CD8-positive, alpha-beta T cell (primary cell): ENCODE measurements at regions of chr1 and their contacts with region 1.

Region 1: DNA sequence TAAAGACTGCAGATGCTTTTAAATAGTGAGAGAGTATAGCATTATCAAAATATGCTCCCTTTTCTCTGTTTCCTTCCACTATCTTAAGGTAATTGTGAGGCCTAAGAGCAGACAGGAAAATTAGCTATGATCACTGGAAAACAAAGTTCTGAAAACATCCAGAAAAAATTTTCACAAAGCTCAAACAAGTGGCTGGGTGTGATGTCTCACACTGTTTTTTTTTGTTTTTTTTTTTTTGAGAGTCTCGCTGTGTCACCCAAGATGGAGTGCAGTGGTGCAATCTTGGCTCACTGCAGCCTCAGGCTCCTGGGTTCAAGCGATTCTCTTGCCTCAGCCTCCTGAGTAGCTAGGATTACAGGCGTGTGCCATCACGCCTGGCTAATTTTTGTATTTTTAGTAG is 7.2 kb downstream of the WDTC1 start:
- DNase-seq: no peak
- ATAC-seq: no peak
- H3K4me3 ChIP-seq: no peak overlapping the region
- H3K4me3 Mint-ChIP-seq: no peak overlapping the region
- H3K27ac ChIP-seq: no peak overlapping the region
- H3K27ac Mint-ChIP-seq: no peak overlapping the region
- H3K4me1 ChIP-seq: no peaks in the 10 kb centered on the region
- H3K4me1 Mint-ChIP-seq: peaks cover 16% of the 10 kb centered on the region
- H3K27me3 ChIP-seq: no peaks in the 10 kb centered on the region
- H3K27me3 Mint-ChIP-seq: no peaks in the 10 kb centered on the region
- CTCF ChIP-seq: no peak

Region 2: DNA sequence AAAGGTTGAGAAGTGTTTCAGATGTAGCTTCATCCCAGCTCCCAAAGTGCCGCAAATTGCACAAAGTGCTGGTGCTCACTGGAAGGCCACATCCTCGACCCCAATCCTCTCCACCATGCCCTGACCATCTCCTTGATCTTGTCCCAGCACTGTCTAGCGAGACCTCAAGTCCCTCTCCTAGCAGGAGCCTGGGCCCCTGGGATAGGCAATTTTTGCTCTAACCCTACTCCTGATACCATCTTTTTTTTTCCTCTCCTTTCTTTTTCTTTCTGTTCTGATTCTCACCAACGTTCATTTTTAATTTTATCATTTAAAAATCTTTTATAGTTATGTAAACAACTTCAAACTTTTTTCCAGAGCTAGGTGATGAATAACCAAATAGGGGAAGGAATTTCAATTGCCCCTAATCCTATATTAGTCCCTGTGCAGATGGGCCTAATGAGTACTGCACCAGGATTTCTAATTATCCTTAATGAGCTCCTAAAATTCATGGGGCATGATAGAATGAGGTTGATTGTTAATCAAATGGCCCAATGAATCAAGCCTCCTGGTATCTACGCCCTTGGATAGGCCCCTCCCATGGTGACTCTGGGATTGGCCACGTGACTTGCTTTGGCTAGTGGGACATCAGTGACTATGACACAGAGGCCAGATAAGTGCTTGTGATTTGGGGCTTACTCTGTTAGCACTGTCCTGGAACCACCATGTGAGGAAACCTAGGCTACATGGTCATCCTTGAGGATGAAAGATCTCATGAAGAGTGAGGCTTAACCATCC is 187.5 kb before region 1 on chr1:
- CTCF ChIA-PET with region 1: no interaction called
- POLR2A ChIA-PET with region 1: no interaction called
- intact Hi-C with region 1: no loop called
- DNase-seq: no peak
- ATAC-seq: no peak
- H3K4me3 ChIP-seq: no peak overlapping the region
- H3K4me3 Mint-ChIP-seq: no peak overlapping the region
- H3K27ac ChIP-seq: no peak overlapping the region
- H3K27ac Mint-ChIP-seq: no peak overlapping the region
- H3K4me1 ChIP-seq: no peaks in the 10 kb centered on the region
- H3K4me1 Mint-ChIP-seq: no peaks in the 10 kb centered on the region
- H3K27me3 ChIP-seq: no peaks in the 10 kb centered on the region
- H3K27me3 Mint-ChIP-seq: no peaks in the 10 kb centered on the region
- CTCF ChIP-seq: no peak

Region 3: DNA sequence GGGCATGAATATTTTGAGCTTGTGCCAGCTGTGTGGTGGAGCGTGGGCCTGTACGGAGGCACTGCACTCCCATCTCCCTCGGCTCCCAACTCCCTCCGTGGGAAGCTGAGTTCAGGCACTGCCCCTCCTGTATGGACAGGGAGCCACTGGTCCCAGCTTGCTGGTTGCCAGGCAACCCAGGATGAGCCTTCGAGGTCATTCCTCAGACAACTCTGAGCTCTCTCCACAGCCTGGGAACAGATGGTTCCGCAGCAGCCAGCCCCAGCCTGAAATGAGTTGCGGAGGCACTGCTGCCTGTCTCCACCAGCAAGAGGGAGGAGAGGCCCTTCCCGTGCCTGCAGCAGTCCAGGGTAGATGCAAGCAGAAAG is 170.6 kb before region 1 on chr1:
- CTCF ChIA-PET with region 1: no interaction called
- POLR2A ChIA-PET with region 1: no interaction called
- intact Hi-C with region 1: no loop called
- DNase-seq: no peak
- ATAC-seq: no peak
- H3K4me3 ChIP-seq: no peak overlapping the region
- H3K4me3 Mint-ChIP-seq: no peak overlapping the region
- H3K27ac ChIP-seq: no peak overlapping the region
- H3K27ac Mint-ChIP-seq: no peak overlapping the region
- H3K4me1 ChIP-seq: no peaks in the 10 kb centered on the region
- H3K4me1 Mint-ChIP-seq: no peaks in the 10 kb centered on the region
- H3K27me3 ChIP-seq: no peaks in the 10 kb centered on the region
- H3K27me3 Mint-ChIP-seq: peaks cover 4% of the 10 kb centered on the region
- CTCF ChIP-seq: no peak

Region 4: GRCh38 chr1:27192039-27192529 is 49.6 kb before region 1 on chr1:
- CTCF ChIA-PET with region 1: interaction called, 3 read pairs
- POLR2A ChIA-PET with region 1: no interaction called
- intact Hi-C with region 1: loop called in 1 of 2 experiments (anchors 10 kb)
- DNase-seq: no peak
- ATAC-seq: no peak
- H3K4me3 ChIP-seq: no peak overlapping the region
- H3K4me3 Mint-ChIP-seq: no peak overlapping the region
- H3K27ac ChIP-seq: no peak overlapping the region
- H3K27ac Mint-ChIP-seq: no peak overlapping the region
- H3K4me1 ChIP-seq: no peaks in the 10 kb centered on the region
- H3K4me1 Mint-ChIP-seq: no peaks in the 10 kb centered on the region
- H3K27me3 ChIP-seq: no peaks in the 10 kb centered on the region
- H3K27me3 Mint-ChIP-seq: no peaks in the 10 kb centered on the region
- CTCF ChIP-seq: no peak

Region 5: GRCh38 chr1:27253596-27253995 is 11.9 kb after region 1 on chr1:
- CTCF ChIA-PET with region 1: no interaction called
- POLR2A ChIA-PET with region 1: no interaction called
- intact Hi-C with region 1: no loop called
- DNase-seq: peak in 1 of 9 experiments; percentile 13
- ATAC-seq: no peak
- H3K4me3 ChIP-seq: no peak overlapping the region
- H3K4me3 Mint-ChIP-seq: no peak overlapping the region
- H3K27ac ChIP-seq: no peak overlapping the region
- H3K27ac Mint-ChIP-seq: peak overlapping the region; percentile 22
- H3K4me1 ChIP-seq: peaks cover 38% of the 10 kb centered on the region
- H3K4me1 Mint-ChIP-seq: peaks cover 49% of the 10 kb centered on the region
- H3K27me3 ChIP-seq: no peaks in the 10 kb centered on the region
- H3K27me3 Mint-ChIP-seq: no peaks in the 10 kb centered on the region
- CTCF ChIP-seq: no peak